Endothelial cell of umbilical vein (primary cell): ENCODE measurements at regions of chr15 and their contacts with region 1.

Region 1: DNA sequence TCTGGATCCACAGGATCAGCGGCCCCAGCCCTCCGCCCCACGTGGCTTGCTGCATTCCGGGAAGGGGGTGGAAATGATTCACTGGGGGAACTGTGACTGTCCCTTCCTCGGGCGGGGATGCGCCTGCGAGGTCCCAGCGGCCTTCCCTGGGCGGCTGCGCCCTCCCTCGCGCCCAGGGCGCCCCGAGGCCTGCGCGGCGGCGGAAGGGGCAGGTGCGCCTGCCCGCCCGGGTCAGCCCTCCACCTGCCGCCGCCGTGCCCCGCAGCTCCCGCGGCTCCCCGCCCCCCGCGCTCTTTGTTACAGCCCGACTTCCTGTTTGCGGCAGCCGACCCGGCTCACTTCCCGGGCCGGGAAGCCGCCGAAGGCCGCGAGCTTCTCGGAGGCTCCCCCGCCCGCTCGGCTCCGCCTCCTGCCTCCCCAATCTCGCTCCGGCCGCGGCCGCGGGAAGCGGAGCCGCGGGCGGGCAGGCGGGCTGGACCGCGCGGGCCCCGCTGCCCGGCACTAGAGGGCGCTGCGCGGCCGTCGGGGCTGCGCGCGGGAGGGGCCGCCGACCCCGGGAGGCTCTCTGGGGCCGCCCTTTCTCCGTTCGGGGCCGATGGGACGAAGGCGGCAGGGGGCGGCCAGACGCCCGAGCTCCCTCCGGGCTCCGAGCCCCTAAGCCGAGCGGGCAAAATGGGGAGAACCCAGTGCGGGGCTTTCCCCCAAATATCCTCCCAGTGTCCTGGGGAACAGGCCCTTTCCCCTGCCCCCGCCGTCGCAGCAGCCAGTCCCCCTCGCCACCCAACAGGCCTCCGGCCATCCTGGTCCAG is 11.5 kb upstream of the CHAC1 start:
- DNase-seq: peak; percentile 88
- H3K4me3 ChIP-seq: peak overlapping the region; percentile 24 to 46 (median 37)
- H3K27ac ChIP-seq: peak overlapping the region; percentile 80
- H3K4me1 ChIP-seq: peaks cover 31% of the 10 kb centered on the region
- H3K27me3 ChIP-seq: no peaks in the 10 kb centered on the region
- CTCF ChIP-seq: peak; percentile 41 to 76
- POLR2A ChIP-seq: peak; percentile 44

Region 2: GRCh38 chr15:40525855-40526254 is 415.9 kb before region 1 on chr15:
- CTCF ChIA-PET with region 1: no interaction called
- POLR2A ChIA-PET with region 1: no interaction called
- dilution Hi-C with region 1: no loop called
- intact Hi-C with region 1: no loop called
- DNase-seq: no peak
- H3K4me3 ChIP-seq: no peak overlapping the region
- H3K27ac ChIP-seq: no peak overlapping the region
- H3K4me1 ChIP-seq: no peaks in the 10 kb centered on the region
- H3K27me3 ChIP-seq: no peaks in the 10 kb centered on the region
- CTCF ChIP-seq: no peak
- POLR2A ChIP-seq: no peak

Region 3: GRCh38 chr15:40852291-40852928 is 89.3 kb before region 1 on chr15:
- CTCF ChIA-PET with region 1: no interaction called
- POLR2A ChIA-PET with region 1: no interaction called
- dilution Hi-C with region 1: no loop called
- intact Hi-C with region 1: no loop called
- DNase-seq: no peak
- H3K4me3 ChIP-seq: no peak overlapping the region
- H3K27ac ChIP-seq: no peak overlapping the region
- H3K4me1 ChIP-seq: no peaks in the 10 kb centered on the region
- H3K27me3 ChIP-seq: no peaks in the 10 kb centered on the region
- CTCF ChIP-seq: no peak
- POLR2A ChIP-seq: no peak

Region 4: GRCh38 chr15:40906091-40906990 is 35.4 kb before region 1 on chr15:
- CTCF ChIA-PET with region 1: interaction called, 172 read pairs
- POLR2A ChIA-PET with region 1: interaction called, 22 read pairs
- dilution Hi-C with region 1: no loop called
- intact Hi-C with region 1: loop called (anchors 1 kb)
- DNase-seq: peak; percentile 98
- H3K4me3 ChIP-seq: peak overlapping the region in 2 of 3 experiments; percentile 9 to 13
- H3K27ac ChIP-seq: peak overlapping the region; percentile 88
- H3K4me1 ChIP-seq: peaks cover 30% of the 10 kb centered on the region
- H3K27me3 ChIP-seq: no peaks in the 10 kb centered on the region
- CTCF ChIP-seq: peak; percentile 89 to 99
- POLR2A ChIP-seq: peak; percentile 67

Region 5: GRCh38 chr15:40928821-40929659 is 12.7 kb before region 1 on chr15 and contains the start of gene DLL4:
- CTCF ChIA-PET with region 1: interaction called, 143 read pairs
- POLR2A ChIA-PET with region 1: interaction called, 51 read pairs
- dilution Hi-C with region 1: no loop called
- intact Hi-C with region 1: loop called (anchors 1 kb)
- DNase-seq: peak; percentile 94
- H3K4me3 ChIP-seq: peak within 1 kb of the TSS; percentile 0 to 89 (median 56)
- H3K27ac ChIP-seq: no peak within 1 kb of the TSS
- H3K4me1 ChIP-seq: peaks cover 25% of the 10 kb centered on the region
- H3K27me3 ChIP-seq: peaks cover 14 to 21% of the 10 kb centered on the region in 2 experiments
- CTCF ChIP-seq: peak in 1 of 2 donors; percentile 7
- POLR2A ChIP-seq: peak; percentile 99
- total RNA-seq, gene DLL4: 55.2 and 75.8 TPM in 2 replicates

Region 6: GRCh38 chr15:40960926-40961325 is 19.2 kb after region 1 on chr15:
- CTCF ChIA-PET with region 1: interaction called, 101 read pairs
- POLR2A ChIA-PET with region 1: interaction called, 10 read pairs
- dilution Hi-C with region 1: no loop called
- intact Hi-C with region 1: no loop called
- DNase-seq: no peak
- H3K4me3 ChIP-seq: no peak overlapping the region
- H3K27ac ChIP-seq: no peak overlapping the region
- H3K4me1 ChIP-seq: no peaks in the 10 kb centered on the region
- H3K27me3 ChIP-seq: no peaks in the 10 kb centered on the region
- CTCF ChIP-seq: no peak
- POLR2A ChIP-seq: no peak

Region 7: GRCh38 chr15:40992241-40992741 is 50.6 kb after region 1 on chr15:
- CTCF ChIA-PET with region 1: interaction called, 11 read pairs
- POLR2A ChIA-PET with region 1: no interaction called
- dilution Hi-C with region 1: no loop called
- intact Hi-C with region 1: no loop called
- DNase-seq: no peak
- H3K4me3 ChIP-seq: no peak overlapping the region
- H3K27ac ChIP-seq: no peak overlapping the region
- H3K4me1 ChIP-seq: no peaks in the 10 kb centered on the region
- H3K27me3 ChIP-seq: no peaks in the 10 kb centered on the region
- CTCF ChIP-seq: no peak
- POLR2A ChIP-seq: no peak

Region 8: GRCh38 chr15:41116116-41116871 is 174.6 kb after region 1 on chr15 and contains the start of gene INO80:
- CTCF ChIA-PET with region 1: interaction called, 5 read pairs
- POLR2A ChIA-PET with region 1: no interaction called
- dilution Hi-C with region 1: no loop called
- intact Hi-C with region 1: loop called (anchors 10 kb)
- DNase-seq: peak; percentile 97
- H3K4me3 ChIP-seq: peak within 1 kb of the TSS; percentile 89 to 95 (median 90)
- H3K27ac ChIP-seq: peak within 1 kb of the TSS; percentile 96
- H3K4me1 ChIP-seq: peaks cover 11% of the 10 kb centered on the region
- H3K27me3 ChIP-seq: peaks cover 0 to 3% of the 10 kb centered on the region in 2 experiments
- CTCF ChIP-seq: no peak
- POLR2A ChIP-seq: peak; percentile 97
- total RNA-seq, gene INO80: 22.9 and 29.1 TPM in 2 replicates

Region 9: DNA sequence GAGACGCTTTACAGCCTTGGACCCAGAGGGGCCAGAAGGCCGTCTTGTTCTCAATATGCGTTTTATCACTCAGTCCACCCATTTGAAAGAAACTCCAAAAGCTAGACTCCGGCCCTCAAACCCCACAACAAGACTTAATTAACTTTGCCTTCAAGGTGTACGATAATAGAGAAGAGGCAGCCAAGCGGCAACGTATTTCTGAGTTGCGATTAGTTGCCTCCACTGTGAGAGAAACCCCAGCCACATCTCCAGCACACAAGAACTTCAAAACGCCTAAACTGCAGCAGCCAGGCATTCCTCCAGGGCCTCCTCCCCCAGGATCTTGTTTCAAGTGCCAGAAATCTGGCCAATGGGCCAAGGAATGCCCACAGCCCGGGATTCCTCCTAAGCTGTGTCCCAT is 191.7 kb after region 1 on chr15:
- CTCF ChIA-PET with region 1: no interaction called
- POLR2A ChIA-PET with region 1: no interaction called
- dilution Hi-C with region 1: no loop called
- intact Hi-C with region 1: no loop called
- DNase-seq: no peak
- H3K4me3 ChIP-seq: no peak overlapping the region
- H3K27ac ChIP-seq: no peak overlapping the region
- H3K4me1 ChIP-seq: no peaks in the 10 kb centered on the region
- H3K27me3 ChIP-seq: peaks cover 0 to 3% of the 10 kb centered on the region in 2 experiments
- CTCF ChIP-seq: no peak
- POLR2A ChIP-seq: no peak

Region 10: GRCh38 chr15:41230650-41231533 is 289.2 kb after region 1 on chr15 and contains the starts of genes CHP1 and EXD1:
- CTCF ChIA-PET with region 1: no interaction called
- POLR2A ChIA-PET with region 1: no interaction called
- dilution Hi-C with region 1: no loop called
- intact Hi-C with region 1: loop called (anchors 5 kb)
- DNase-seq: peak; percentile 98
- H3K4me3 ChIP-seq: peak within 1 kb of the TSS; percentile 73 to 96 (median 87)
- H3K27ac ChIP-seq: peak within 1 kb of the TSS; percentile 71
- H3K4me1 ChIP-seq: peaks cover 15% of the 10 kb centered on the region
- H3K27me3 ChIP-seq: no peaks in the 10 kb centered on the region
- CTCF ChIP-seq: peak; percentile 93 to 98
- POLR2A ChIP-seq: peak; percentile 67
- total RNA-seq, gene CHP1: 84.4 and 96.2 TPM in 2 replicates
- total RNA-seq, gene EXD1: not detected in 2 replicates